SK-MEL-5 (cell line): ENCODE measurements at regions of chr5 and their contacts with region 1.

Region 1: DNA sequence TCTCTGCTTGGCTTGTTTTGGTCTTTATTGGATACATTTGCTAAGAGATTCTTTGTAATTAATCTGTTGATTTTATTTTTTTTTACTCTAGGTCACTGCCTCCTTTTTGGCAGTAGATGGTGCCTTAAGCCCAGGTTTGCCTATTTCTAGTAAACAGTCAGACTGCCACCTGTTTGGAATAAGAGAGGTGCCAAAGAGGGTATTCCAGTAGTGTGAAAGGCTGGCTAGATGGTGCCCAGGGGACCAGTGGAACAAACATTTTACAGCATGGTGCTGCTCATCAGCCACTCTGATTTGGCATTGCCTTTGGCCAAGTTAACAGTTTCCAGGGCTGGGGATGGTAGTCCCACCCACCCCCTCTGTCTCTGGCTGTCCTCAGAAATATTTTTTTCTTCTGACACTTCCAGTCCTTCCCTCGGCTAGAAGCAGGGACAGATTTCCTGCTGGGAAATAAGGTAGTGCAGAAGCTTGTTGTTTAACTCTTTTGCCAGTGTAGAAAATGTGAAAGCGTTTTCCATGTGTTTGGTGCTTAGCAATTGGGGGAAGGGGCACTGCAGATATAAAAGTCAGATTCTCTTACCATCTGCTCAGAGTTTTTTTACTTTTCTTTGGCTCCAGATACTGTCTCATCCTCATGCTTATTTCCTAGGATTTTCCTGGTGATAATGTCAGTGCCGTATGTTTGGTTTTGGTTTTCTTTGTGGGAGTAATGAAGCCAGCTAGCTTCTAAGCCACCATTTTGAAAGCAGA is 36.6 kb upstream of the FBXL7 start:
- DNase-seq: peak; percentile 75

Region 2: DNA sequence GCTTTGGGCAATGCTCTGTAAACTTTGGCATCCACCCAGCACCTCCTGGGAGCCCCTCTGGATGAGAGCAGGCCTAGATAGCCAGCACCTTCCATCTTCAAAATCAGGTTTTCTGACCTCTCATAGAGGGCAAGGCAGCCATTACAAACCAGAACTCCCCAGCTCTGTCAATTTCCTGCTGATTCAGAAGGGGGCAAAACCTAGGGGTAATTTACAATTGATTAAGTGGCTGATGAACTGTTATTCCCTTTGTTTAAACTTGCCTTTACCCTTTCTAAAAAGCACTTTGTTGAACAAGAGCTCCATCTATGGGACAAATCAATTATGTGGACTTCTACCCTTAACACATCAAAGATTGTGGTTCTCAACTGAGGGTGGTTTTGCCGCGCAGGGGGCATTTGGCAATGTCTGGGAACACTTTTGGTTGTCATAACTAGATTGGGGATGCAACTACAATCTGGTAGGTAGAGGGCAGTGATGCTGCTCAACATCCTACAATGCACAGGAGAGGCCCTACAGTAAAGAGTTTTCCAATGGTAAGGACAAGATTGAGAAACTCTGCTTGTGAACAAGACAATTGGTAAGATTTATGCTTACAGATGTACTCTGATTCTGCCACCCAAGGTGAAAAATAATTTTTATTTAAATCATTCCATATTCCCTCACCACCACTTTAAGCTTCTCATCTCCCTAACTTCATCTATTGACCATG is 532.1 kb after region 1 on chr5:
- in situ Hi-C with region 1: loop called (anchors 25 kb)
- DNase-seq: peak; percentile 79